ENCODE measurements at regions of chr2 and their contacts with region 1.

Region 1: DNA sequence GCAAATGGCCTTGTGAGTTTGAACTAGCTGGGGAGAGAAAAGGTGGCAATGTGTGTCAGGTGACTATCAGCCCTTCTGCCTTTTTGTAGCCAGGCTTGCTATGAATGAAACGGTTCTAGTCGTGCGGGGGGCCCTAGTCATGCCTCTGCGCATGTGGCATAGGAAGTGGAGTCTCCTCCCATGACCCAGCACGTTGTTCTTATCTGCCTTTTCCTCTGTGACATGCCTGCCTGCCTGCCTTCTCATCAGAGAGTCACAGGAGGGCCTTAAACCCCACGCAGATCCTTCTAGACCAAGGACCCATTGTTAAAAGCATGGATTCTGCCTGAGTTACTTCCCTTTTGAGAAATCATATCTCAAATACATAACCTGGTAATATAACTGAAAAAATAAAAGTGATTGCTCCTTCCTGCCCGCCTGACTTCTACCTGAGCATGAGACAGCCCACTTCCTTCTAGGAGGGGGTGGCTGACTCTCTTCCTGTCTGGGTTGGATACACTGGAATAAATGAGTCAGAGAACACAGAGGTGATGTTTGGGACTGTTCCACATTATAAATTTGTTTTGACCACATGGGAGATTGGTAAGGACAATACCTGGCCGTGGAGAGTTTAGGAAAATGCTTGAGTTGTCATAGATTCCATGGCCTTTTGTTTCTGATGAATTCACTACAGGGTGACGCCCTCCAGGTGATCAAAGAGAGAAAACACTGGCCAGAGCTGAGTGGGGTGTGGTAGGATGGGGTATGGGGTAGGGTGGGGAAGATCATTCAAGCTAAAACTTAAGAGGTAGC is 49.8 kb downstream of the FBLN7 start:
- DNase-seq: peak; percentile 91
- H3K4me3 Mint-ChIP-seq: peak overlapping the region; percentile 77
- H3K27ac Mint-ChIP-seq: peak overlapping the region; percentile 94
- H3K4me1 Mint-ChIP-seq: peaks cover 76% of the 10 kb centered on the region
- H3K27me3 Mint-ChIP-seq: peaks cover 2% of the 10 kb centered on the region

Region 2: GRCh38 chr2:112216166-112216565 is 28.2 kb after region 1 on chr2:
- intact Hi-C with region 1: no loop called
- DNase-seq: no peak
- H3K4me3 Mint-ChIP-seq: no peak overlapping the region
- H3K27ac Mint-ChIP-seq: no peak overlapping the region
- H3K4me1 Mint-ChIP-seq: peaks cover 4% of the 10 kb centered on the region
- H3K27me3 Mint-ChIP-seq: no peaks in the 10 kb centered on the region

Region 3: GRCh38 chr2:112242384-112242783 is 54.4 kb after region 1 on chr2:
- intact Hi-C with region 1: no loop called
- DNase-seq: no peak
- H3K4me3 Mint-ChIP-seq: no peak overlapping the region
- H3K27ac Mint-ChIP-seq: no peak overlapping the region
- H3K4me1 Mint-ChIP-seq: peaks cover 16% of the 10 kb centered on the region
- H3K27me3 Mint-ChIP-seq: no peaks in the 10 kb centered on the region

Region 4: GRCh38 chr2:112275306-112275886 is 87.4 kb after region 1 on chr2 and contains the start of gene ZC3H6:
- intact Hi-C with region 1: loop called (anchors 1 kb)
- DNase-seq: peak; percentile 100
- H3K4me3 Mint-ChIP-seq: peak within 1 kb of the TSS; percentile 92
- H3K27ac Mint-ChIP-seq: peak within 1 kb of the TSS; percentile 99
- H3K4me1 Mint-ChIP-seq: peaks cover 8% of the 10 kb centered on the region
- H3K27me3 Mint-ChIP-seq: no peaks in the 10 kb centered on the region
- total RNA-seq, gene ZC3H6: 4.9 and 6.2 TPM in 2 replicates

Region 5: GRCh38 chr2:112584134-112584890 is 396.3 kb after region 1 on chr2 and contains the start of gene CHCHD5:
- intact Hi-C with region 1: loop called (anchors 10 kb)
- DNase-seq: peak; percentile 98
- H3K4me3 Mint-ChIP-seq: peak within 1 kb of the TSS; percentile 93
- H3K27ac Mint-ChIP-seq: peak within 1 kb of the TSS; percentile 99
- H3K4me1 Mint-ChIP-seq: peaks cover 33% of the 10 kb centered on the region
- H3K27me3 Mint-ChIP-seq: no peaks in the 10 kb centered on the region
- total RNA-seq, gene CHCHD5: 36.4 and 37.6 TPM in 2 replicates